Right ventricle myocardium superior (tissue), 1 donor: ENCODE measurements at regions of chr3 and their contacts with region 1.

Region 1: DNA sequence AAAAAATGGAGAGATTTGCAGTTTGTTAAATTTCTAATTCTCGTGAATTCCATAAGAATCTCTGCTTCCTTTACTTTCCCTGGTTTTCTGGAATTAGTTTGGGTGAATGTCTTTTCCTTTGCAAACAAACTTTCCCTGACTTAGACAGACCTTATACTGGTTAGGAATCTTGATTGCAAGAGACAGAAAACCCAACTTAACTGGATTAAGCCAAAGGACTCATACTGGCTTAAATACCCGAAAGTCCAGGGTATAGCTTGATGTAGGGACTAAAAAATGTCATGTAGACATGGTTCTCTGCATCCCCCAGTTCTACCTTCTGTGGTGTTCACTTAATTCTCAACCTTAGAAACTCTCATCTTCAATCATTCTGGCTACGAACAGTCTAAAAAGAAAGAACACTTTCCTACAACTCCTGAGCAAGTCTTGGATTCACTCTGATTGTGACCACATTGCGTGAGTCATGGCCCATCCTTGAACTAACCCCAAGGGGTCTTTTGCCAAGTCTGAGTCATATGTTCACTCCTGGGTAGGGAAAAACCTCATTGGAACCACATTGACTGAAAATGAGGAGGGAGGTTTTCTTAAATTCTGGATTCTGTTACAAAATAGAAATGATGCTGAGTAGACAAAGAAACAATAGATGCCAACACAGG is 136.0 kb upstream of the DAZL start:
- DNase-seq: no peak
- ATAC-seq: no peak

Region 2: GRCh38 chr3:16897254-16897926 is 156.2 kb after region 1 on chr3:
- intact Hi-C with region 1: loop called (anchors 10 kb)
- DNase-seq: no peak
- ATAC-seq: no peak